Naive thymus-derived CD4-positive, alpha-beta T cell (primary cell): ENCODE measurements at regions of chr22 and their contacts with region 1.

Region 1: DNA sequence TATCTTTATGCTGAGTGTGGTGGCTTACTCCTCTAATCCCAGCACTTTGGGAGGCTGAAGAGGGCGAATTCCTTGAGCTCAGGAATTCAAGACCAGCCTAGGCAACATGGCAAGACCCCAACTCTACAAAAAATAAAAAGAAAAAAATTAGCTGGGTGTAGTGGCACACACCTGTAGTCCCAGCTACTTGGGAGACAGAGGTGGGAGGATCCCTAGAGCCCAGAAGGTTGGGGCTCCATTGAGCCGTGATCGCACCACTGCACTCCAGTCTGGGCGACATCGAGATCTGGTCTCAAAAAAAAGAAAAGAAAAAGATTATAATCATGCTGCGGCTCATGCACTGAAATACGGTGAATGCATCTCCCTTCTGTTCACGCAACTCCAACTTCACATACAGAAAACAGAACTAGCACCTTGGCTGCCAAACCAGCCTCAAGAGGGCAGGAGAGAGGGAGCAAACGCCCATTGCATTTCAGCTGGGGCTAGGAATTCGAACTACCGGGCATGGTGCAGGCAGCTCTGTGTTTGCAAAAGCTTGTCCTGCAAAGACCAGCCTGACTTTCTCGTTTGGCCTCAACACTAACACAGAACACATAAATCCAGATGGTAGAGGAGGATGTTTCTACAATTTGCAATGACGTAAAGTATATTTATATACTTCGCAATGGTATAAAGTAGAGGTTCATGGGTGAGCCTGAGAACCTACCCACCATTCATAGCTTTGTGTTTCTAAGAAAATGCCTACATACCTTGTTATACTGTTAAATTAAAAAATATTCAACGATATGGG is 6.3 kb upstream of the SYNGR1 start:
- DNase-seq: peak; percentile 25 to 69 (median 59)
- ATAC-seq: peak; percentile 85
- H3K4me3 ChIP-seq: no peak overlapping the region
- H3K4me3 Mint-ChIP-seq: no peak overlapping the region
- H3K27ac ChIP-seq: no peak overlapping the region
- H3K27ac Mint-ChIP-seq: no peak overlapping the region
- H3K4me1 ChIP-seq: no peaks in the 10 kb centered on the region
- H3K4me1 Mint-ChIP-seq: peaks cover 5 to 9% (median 6%) of the 10 kb centered on the region in 7 donors
- H3K27me3 ChIP-seq: no peaks in the 10 kb centered on the region
- H3K27me3 Mint-ChIP-seq: peaks cover 0 to 41% (median 3%) of the 10 kb centered on the region in 5 donors

Region 2: DNA sequence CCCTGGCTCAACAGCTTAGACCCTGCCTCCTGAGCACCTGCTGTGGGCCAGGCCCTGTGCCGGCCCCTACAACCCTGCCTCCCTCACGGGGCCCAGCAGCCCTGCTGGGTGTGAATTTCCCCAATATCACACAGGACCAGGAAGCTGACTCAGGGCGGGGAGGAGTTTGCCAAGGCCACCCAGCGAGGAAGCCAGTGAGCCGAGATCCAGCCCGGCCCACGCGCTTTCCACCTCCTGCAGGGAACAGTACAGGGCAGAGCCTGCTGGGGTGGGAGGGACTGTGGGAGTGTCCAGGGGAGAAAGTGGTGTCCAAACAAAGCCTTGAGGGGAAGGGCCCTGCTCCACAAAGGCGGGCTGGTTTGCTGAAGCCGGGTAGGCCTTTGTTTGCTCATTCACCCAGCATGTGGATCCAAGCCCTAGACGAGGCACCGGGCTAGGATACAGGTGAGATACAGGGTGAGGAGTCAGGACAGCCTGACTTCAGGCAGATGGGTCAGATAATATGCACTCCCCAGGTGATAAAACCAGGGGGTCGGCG is 50.8 kb before region 1 on chr22:
- CTCF ChIA-PET with region 1: no interaction called
- POLR2A ChIA-PET with region 1: no interaction called
- intact Hi-C with region 1: no loop called
- DNase-seq: no peak
- ATAC-seq: peak; percentile 90
- H3K4me3 ChIP-seq: no peak overlapping the region
- H3K4me3 Mint-ChIP-seq: no peak overlapping the region
- H3K27ac ChIP-seq: no peak overlapping the region
- H3K27ac Mint-ChIP-seq: no peak overlapping the region
- H3K4me1 ChIP-seq: no peaks in the 10 kb centered on the region
- H3K4me1 Mint-ChIP-seq: peaks cover 0 to 11% (median 1%) of the 10 kb centered on the region in 7 donors
- H3K27me3 ChIP-seq: no peaks in the 10 kb centered on the region
- H3K27me3 Mint-ChIP-seq: peaks cover 0 to 9% (median 3%) of the 10 kb centered on the region in 5 donors

Region 3: GRCh38 chr22:39303892-39304671 is 39.4 kb before region 1 on chr22:
- CTCF ChIA-PET with region 1: no interaction called
- POLR2A ChIA-PET with region 1: no interaction called
- intact Hi-C with region 1: no loop called
- DNase-seq: no peak
- ATAC-seq: no peak
- H3K4me3 ChIP-seq: no peak overlapping the region
- H3K4me3 Mint-ChIP-seq: no peak overlapping the region
- H3K27ac ChIP-seq: no peak overlapping the region
- H3K27ac Mint-ChIP-seq: no peak overlapping the region
- H3K4me1 ChIP-seq: peaks cover 0 to 5% of the 10 kb centered on the region in 2 donors
- H3K4me1 Mint-ChIP-seq: peaks cover 3 to 18% (median 9%) of the 10 kb centered on the region in 7 donors
- H3K27me3 ChIP-seq: no peaks in the 10 kb centered on the region
- H3K27me3 Mint-ChIP-seq: peaks cover 8 to 22% (median 13%) of the 10 kb centered on the region in 5 donors

Region 4: GRCh38 chr22:39332441-39333064 is 10.9 kb before region 1 on chr22:
- CTCF ChIA-PET with region 1: interaction called, 20 read pairs
- POLR2A ChIA-PET with region 1: no interaction called
- intact Hi-C with region 1: no loop called
- DNase-seq: no peak
- ATAC-seq: no peak
- H3K4me3 ChIP-seq: no peak overlapping the region
- H3K4me3 Mint-ChIP-seq: no peak overlapping the region
- H3K27ac ChIP-seq: no peak overlapping the region
- H3K27ac Mint-ChIP-seq: no peak overlapping the region
- H3K4me1 ChIP-seq: no peaks in the 10 kb centered on the region
- H3K4me1 Mint-ChIP-seq: peaks cover 6 to 20% (median 15%) of the 10 kb centered on the region in 7 donors
- H3K27me3 ChIP-seq: no peaks in the 10 kb centered on the region
- H3K27me3 Mint-ChIP-seq: peaks cover 0 to 2% (median 0%) of the 10 kb centered on the region in 5 donors

Region 5: GRCh38 chr22:39388261-39389011 is 45.0 kb after region 1 on chr22:
- CTCF ChIA-PET with region 1: no interaction called
- POLR2A ChIA-PET with region 1: interaction called, 4 read pairs
- intact Hi-C with region 1: loop called in 1 of 2 experiments (anchors 2 kb)
- DNase-seq: peak in 8 of 9 donors; percentile 16 to 89 (median 77)
- ATAC-seq: peak; percentile 96
- H3K4me3 ChIP-seq: peak overlapping the region; percentile 56
- H3K4me3 Mint-ChIP-seq: peak overlapping the region; percentile 57 to 98 (median 90)
- H3K27ac ChIP-seq: peak overlapping the region; percentile 87
- H3K27ac Mint-ChIP-seq: peak overlapping the region in 8 of 9 donors; percentile 51 to 99 (median 94)
- H3K4me1 ChIP-seq: peaks cover 0 to 4% of the 10 kb centered on the region in 2 donors
- H3K4me1 Mint-ChIP-seq: peaks cover 6 to 31% (median 18%) of the 10 kb centered on the region in 7 donors
- H3K27me3 ChIP-seq: no peaks in the 10 kb centered on the region
- H3K27me3 Mint-ChIP-seq: peaks cover 0 to 4% (median 0%) of the 10 kb centered on the region in 5 donors

Region 6: DNA sequence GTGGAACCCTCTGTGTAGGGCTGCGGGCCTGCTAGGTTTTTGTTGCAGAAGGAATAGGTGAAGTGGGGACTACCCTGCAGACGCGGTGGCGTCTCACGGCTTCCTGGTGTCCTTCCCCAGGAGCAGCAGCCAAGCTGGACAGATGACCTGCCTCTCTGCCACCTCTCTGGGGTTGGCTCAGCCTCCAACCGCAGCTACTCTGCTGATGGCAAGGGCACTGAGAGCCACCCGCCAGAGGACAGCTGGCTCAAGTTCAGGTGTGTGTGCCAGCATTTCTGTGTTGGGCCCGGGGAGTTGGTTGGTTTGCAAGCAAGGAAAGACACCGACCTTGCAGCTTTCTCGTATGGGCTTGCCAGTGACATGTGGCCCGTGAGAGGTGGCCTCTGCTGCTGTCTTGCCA is 71.4 kb after region 1 on chr22:
- CTCF ChIA-PET with region 1: interaction called, 3 read pairs
- POLR2A ChIA-PET with region 1: interaction called, 4 read pairs
- intact Hi-C with region 1: loop called in 1 of 2 experiments (anchors 10 kb)
- DNase-seq: no peak
- ATAC-seq: no peak
- H3K4me3 ChIP-seq: no peak overlapping the region
- H3K4me3 Mint-ChIP-seq: peak overlapping the region; percentile 14 to 78 (median 72)
- H3K27ac ChIP-seq: peak overlapping the region; percentile 38
- H3K27ac Mint-ChIP-seq: peak overlapping the region in 6 of 9 donors; percentile 79 to 93 (median 89)
- H3K4me1 ChIP-seq: peaks cover 12 to 62% of the 10 kb centered on the region in 2 donors
- H3K4me1 Mint-ChIP-seq: peaks cover 41 to 91% (median 67%) of the 10 kb centered on the region in 7 donors
- H3K27me3 ChIP-seq: no peaks in the 10 kb centered on the region
- H3K27me3 Mint-ChIP-seq: no peaks in the 10 kb centered on the region

Region 7: DNA sequence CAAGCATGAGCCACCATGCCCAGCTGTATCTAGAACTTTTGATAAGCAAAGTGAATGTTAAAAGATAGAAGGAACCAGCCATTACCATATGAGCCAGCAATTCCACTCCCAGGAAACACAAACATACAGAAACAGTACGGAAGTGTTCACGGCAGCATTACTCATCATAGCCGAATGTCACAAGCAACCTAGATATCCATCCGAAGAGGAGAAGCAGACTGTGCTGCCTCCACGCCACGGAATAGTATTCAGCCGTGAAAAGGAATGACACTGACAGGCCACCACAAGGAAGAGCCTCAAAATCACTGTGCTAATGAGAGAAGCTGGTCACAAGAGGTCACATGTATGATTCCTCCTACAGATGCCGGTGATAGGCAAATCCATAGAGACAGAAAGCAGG is 95.7 kb after region 1 on chr22:
- CTCF ChIA-PET with region 1: no interaction called
- POLR2A ChIA-PET with region 1: no interaction called
- intact Hi-C with region 1: loop called in 1 of 2 experiments (anchors 1 kb)
- DNase-seq: no peak
- ATAC-seq: peak; percentile 81
- H3K4me3 ChIP-seq: no peak overlapping the region
- H3K4me3 Mint-ChIP-seq: peak overlapping the region in 2 of 10 donors; percentile 20 to 29
- H3K27ac ChIP-seq: no peak overlapping the region
- H3K27ac Mint-ChIP-seq: peak overlapping the region in 1 of 9 donors; percentile 4
- H3K4me1 ChIP-seq: peaks cover 0 to 11% of the 10 kb centered on the region in 2 donors
- H3K4me1 Mint-ChIP-seq: peaks cover 3 to 19% (median 7%) of the 10 kb centered on the region in 7 donors
- H3K27me3 ChIP-seq: peaks cover 0 to 4% of the 10 kb centered on the region in 2 donors
- H3K27me3 Mint-ChIP-seq: peaks cover 0 to 10% (median 7%) of the 10 kb centered on the region in 5 donors

Region 8: DNA sequence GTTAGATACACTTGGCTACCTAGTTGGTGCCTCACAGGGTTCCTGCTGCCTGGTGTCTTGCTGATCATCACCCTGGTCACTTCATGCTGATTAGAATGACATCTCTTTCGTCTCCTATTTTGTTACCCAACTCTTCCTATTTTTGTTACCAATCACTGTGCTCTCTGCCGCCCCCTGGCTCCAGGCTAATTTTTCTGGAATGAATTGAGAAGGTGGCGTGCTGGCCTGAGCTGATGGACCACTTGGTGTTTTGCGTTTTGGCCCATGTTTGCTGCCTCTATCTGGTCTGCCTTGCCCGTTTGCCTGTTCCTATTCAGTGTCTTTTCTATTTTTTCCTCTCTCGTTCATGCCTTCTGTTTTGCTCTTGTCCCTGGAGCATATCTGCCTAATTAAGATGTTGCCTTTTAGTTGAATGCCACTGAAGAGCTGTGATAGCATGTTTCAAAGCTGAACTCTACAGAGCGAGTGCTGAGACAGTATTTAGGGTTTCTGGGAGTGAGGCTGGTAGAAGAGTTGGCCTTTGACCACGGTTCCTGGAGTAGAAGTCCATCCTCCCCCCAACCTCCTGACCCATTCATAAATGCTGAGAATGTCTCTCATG is 171.0 kb after region 1 on chr22:
- CTCF ChIA-PET with region 1: interaction called, 4 read pairs
- POLR2A ChIA-PET with region 1: interaction called, 8 read pairs
- intact Hi-C with region 1: loop called in 1 of 2 experiments (anchors 1 kb)
- DNase-seq: peak in 6 of 9 donors; percentile 18 to 55 (median 52)
- ATAC-seq: peak; percentile 72
- H3K4me3 ChIP-seq: no peak overlapping the region
- H3K4me3 Mint-ChIP-seq: no peak overlapping the region
- H3K27ac ChIP-seq: no peak overlapping the region
- H3K27ac Mint-ChIP-seq: peak overlapping the region in 5 of 9 donors; percentile 12 to 59 (median 23)
- H3K4me1 ChIP-seq: peaks cover 0 to 9% of the 10 kb centered on the region in 2 donors
- H3K4me1 Mint-ChIP-seq: peaks cover 11 to 43% (median 22%) of the 10 kb centered on the region in 7 donors
- H3K27me3 ChIP-seq: no peaks in the 10 kb centered on the region
- H3K27me3 Mint-ChIP-seq: no peaks in the 10 kb centered on the region

Region 9: GRCh38 chr22:40036591-40037225 is 693.3 kb after region 1 on chr22:
- CTCF ChIA-PET with region 1: no interaction called
- POLR2A ChIA-PET with region 1: no interaction called
- intact Hi-C with region 1: loop called in 1 of 2 experiments (anchors 2 kb)
- DNase-seq: peak in 7 of 9 donors; percentile 26 to 56 (median 48)
- ATAC-seq: peak; percentile 81
- H3K4me3 ChIP-seq: no peak overlapping the region
- H3K4me3 Mint-ChIP-seq: no peak overlapping the region
- H3K27ac ChIP-seq: no peak overlapping the region
- H3K27ac Mint-ChIP-seq: no peak overlapping the region
- H3K4me1 ChIP-seq: no peaks in the 10 kb centered on the region
- H3K4me1 Mint-ChIP-seq: peaks cover 0 to 7% (median 6%) of the 10 kb centered on the region in 7 donors
- H3K27me3 ChIP-seq: peaks cover 0 to 3% of the 10 kb centered on the region in 2 donors
- H3K27me3 Mint-ChIP-seq: peaks cover 3 to 25% (median 15%) of the 10 kb centered on the region in 5 donors